Ascending aorta (tissue), 2 donors: ENCODE measurements at regions of chr9 and their contacts with region 1.

Region 1: DNA sequence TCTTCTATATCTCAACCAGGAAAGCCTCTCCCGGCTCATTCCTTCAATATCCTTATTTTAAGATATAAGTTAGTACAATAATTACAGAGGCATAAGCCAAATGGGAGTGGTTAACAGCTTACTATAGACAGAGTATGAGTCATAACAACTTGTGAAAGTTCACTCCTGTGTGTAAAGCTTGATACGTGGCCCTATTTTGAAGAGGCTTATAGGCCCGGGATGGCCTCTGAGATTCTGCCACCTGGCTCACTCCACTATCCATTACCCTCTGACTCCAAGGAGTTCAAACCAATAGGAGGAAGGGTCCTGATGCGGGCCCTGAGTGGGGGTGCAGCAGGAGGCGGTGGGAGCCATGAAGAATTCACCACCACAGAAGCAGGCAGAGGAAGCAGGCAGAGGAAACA is 36.6 kb downstream of the B4GALT1 start:
- DNase-seq: no peak
- H3K4me3 ChIP-seq: no peak overlapping the region
- H3K27ac ChIP-seq: no peak overlapping the region
- H3K4me1 ChIP-seq: peaks cover 4 to 38% of the 10 kb centered on the region in 2 donors
- H3K27me3 ChIP-seq: no peaks in the 10 kb centered on the region
- CTCF ChIP-seq: no peak

Region 2: GRCh38 chr9:31253800-31254762 is 1876.4 kb before region 1 on chr9:
- intact Hi-C with region 1: no loop called
- DNase-seq: no peak
- H3K4me3 ChIP-seq: no peak overlapping the region
- H3K27ac ChIP-seq: no peak overlapping the region
- H3K4me1 ChIP-seq: no peaks in the 10 kb centered on the region
- H3K27me3 ChIP-seq: no peaks in the 10 kb centered on the region
- CTCF ChIP-seq: no peak

Region 3: GRCh38 chr9:32524892-32525708 is 605.4 kb before region 1 on chr9:
- intact Hi-C with region 1: no loop called
- DNase-seq: no peak
- H3K4me3 ChIP-seq: peak overlapping the region; percentile 71 to 78
- H3K27ac ChIP-seq: peak overlapping the region; percentile 78 to 79
- H3K4me1 ChIP-seq: peaks cover 7 to 17% of the 10 kb centered on the region in 2 donors
- H3K27me3 ChIP-seq: no peaks in the 10 kb centered on the region
- CTCF ChIP-seq: no peak

Region 4: DNA sequence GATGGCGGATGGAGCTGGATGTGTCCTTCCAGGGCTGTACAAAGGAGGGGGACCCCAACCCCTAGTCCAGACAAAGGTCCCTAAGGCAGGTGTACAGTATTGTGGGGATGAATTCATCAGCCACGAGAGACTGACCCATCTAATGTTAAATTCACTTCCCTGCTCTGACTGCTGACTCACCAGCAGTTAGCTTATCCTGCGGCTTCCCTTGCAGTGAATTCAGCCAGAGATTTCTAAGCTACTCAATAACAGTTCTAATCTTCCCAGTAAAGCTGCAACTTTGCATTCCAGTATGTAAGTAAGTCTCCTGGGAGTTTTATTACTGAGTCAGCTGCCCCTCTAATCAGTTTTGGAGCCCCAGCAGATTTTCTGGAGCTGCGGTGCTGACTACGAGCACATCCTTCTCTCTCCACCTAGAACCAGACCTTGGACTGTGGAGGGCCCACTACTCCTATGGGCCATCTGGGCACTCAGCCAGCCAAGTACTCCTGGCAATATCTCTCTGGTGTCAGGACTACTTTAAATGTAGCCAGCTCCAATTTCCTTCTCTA is 20.6 kb after region 1 on chr9:
- intact Hi-C with region 1: no loop called
- DNase-seq: peak in 1 of 2 donors; percentile 67
- H3K4me3 ChIP-seq: no peak overlapping the region
- H3K27ac ChIP-seq: peak overlapping the region; percentile 72 to 86
- H3K4me1 ChIP-seq: peaks cover 5 to 46% of the 10 kb centered on the region in 2 donors
- H3K27me3 ChIP-seq: no peaks in the 10 kb centered on the region
- CTCF ChIP-seq: no peak

Region 5: GRCh38 chr9:33161011-33161588 is 30.6 kb after region 1 on chr9:
- intact Hi-C with region 1: no loop called
- DNase-seq: peak; percentile 52 to 83
- H3K4me3 ChIP-seq: peak overlapping the region; percentile 19 to 42
- H3K27ac ChIP-seq: peak overlapping the region; percentile 98 to 99
- H3K4me1 ChIP-seq: peaks cover 40 to 80% of the 10 kb centered on the region in 2 donors
- H3K27me3 ChIP-seq: no peaks in the 10 kb centered on the region
- CTCF ChIP-seq: no peak

Region 6: DNA sequence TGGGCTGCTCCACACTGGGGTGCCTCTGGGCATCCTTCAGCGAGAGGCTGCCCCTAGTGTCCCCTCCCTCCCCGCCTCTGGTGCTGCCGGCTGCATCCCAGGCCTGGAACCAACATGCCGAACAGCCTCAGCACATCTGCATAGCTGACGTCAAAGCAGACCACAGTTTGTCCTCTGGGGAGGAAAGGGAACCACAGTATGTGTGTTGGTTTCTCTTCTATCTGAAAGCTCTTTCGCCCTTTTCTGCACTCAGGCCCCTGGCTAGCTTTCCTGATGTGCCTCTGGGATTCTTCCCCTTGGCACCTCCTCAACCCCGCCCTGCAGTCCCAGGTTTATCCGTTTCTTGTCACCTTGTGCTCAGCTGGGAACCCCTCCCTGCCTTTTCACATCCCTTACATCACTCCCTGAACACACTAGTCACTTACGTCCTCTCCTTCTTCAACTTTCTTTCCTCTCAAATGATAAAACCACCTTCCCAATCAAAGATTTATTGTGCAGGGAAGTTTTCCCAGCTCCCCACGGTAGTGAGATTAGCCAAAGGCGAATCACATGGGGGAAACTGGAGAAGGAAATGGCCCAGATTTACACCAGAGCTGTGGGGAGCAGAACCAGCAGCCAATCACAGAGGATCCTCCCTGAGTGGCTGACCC is 72.2 kb after region 1 on chr9:
- intact Hi-C with region 1: loop called (anchors 5 kb)
- DNase-seq: peak; percentile 40 to 82
- H3K4me3 ChIP-seq: no peak overlapping the region
- H3K27ac ChIP-seq: no peak overlapping the region
- H3K4me1 ChIP-seq: peaks cover 0 to 4% of the 10 kb centered on the region in 2 donors
- H3K27me3 ChIP-seq: no peaks in the 10 kb centered on the region
- CTCF ChIP-seq: no peak